Mammary epithelial cell (primary cell): ENCODE measurements at regions of chr4 and their contacts with region 1.

Region 1: DNA sequence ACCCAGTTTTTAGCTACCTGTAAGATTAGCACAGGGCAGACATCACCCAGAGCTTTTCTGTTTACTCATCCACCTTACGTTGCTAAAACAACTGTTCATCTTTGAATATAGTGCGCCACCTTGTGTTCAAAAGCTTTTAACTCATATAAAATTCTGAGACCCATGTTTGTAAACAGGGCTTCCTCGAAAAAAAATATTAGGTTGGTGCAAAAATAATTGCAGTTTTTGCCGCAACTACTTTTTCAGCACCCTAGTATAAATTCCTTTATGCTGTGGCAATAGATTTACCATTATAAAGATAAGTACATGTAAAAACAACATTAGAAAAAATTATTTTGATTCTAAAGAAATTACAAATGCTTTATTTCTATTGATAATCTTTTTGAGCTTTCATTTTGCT is 147.9 kb downstream of the LRBA start:
- DNase-seq: peak; percentile 72
- H3K4me3 ChIP-seq: no peak overlapping the region
- H3K27ac ChIP-seq: no peak overlapping the region
- H3K4me1 ChIP-seq: no peaks in the 10 kb centered on the region
- H3K27me3 ChIP-seq: no peaks in the 10 kb centered on the region
- CTCF ChIP-seq: peak; percentile 28 to 52

Region 2: DNA sequence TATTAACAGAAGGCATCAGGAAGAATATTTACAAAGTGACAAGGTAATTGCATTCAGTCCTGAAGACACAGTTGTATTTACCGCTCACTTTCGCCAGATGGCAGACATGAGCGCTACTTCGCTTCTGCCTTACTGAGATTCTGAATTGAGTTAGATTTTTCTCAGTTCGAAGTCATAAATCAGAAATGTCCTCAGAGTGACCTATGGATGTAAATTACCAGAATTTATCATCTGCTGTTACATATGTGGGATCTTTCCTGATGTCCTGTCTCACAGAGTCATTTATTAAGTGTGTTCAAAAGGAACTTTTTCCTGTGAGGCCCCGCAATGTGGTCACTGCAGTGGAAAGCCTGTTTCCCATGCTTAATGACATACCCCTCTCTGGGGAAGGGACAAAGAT is 886.2 kb before region 1 on chr4:
- CTCF ChIA-PET with region 1: no interaction called
- dilution Hi-C with region 1: no loop called
- in situ Hi-C with region 1: no loop called
- intact Hi-C with region 1: loop called (anchors 10 kb)
- DNase-seq: peak; percentile 34
- H3K4me3 ChIP-seq: no peak overlapping the region
- H3K27ac ChIP-seq: no peak overlapping the region
- H3K4me1 ChIP-seq: no peaks in the 10 kb centered on the region
- H3K27me3 ChIP-seq: no peaks in the 10 kb centered on the region
- CTCF ChIP-seq: peak; percentile 75 to 86

Region 3: GRCh38 chr4:150217192-150217591 is 650.0 kb before region 1 on chr4:
- CTCF ChIA-PET with region 1: interaction called, 3 read pairs
- dilution Hi-C with region 1: no loop called
- in situ Hi-C with region 1: no loop called
- intact Hi-C with region 1: loop called (anchors 1 kb)
- DNase-seq: peak; percentile 70
- H3K4me3 ChIP-seq: no peak overlapping the region
- H3K27ac ChIP-seq: no peak overlapping the region
- H3K4me1 ChIP-seq: peaks cover 17% of the 10 kb centered on the region
- H3K27me3 ChIP-seq: no peaks in the 10 kb centered on the region
- CTCF ChIP-seq: peak; percentile 31 to 77

Region 4: GRCh38 chr4:150297861-150298474 is 569.2 kb before region 1 on chr4:
- CTCF ChIA-PET with region 1: interaction called, 3 read pairs
- dilution Hi-C with region 1: no loop called
- in situ Hi-C with region 1: no loop called
- intact Hi-C with region 1: loop called (anchors 1 kb)
- DNase-seq: peak; percentile 43
- H3K4me3 ChIP-seq: no peak overlapping the region
- H3K27ac ChIP-seq: no peak overlapping the region
- H3K4me1 ChIP-seq: peaks cover 8% of the 10 kb centered on the region
- H3K27me3 ChIP-seq: no peaks in the 10 kb centered on the region
- CTCF ChIP-seq: peak; percentile 45 to 71

Region 5: DNA sequence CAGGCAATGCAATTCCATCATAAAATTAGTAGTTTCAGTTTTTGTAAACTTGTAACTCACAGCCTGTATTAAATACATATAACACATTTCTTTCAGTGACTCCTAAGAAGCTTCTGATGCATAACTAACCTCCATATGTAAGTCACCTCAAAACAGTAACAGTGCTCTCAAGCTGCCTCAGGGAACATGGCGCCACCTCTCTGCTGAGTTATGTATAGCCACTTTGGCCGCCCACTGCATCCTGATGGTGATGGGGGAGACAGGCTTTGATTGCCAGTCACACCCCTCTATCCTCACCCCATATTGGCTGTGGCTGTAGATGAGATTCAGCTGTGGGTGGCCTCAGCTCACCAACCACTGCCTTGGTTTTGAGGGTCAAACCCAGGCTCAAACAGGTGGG is 93.7 kb after region 1 on chr4:
- CTCF ChIA-PET with region 1: interaction called, 4 read pairs
- dilution Hi-C with region 1: no loop called
- in situ Hi-C with region 1: no loop called
- intact Hi-C with region 1: loop called (anchors 2 kb)
- DNase-seq: peak; percentile 41
- H3K4me3 ChIP-seq: no peak overlapping the region
- H3K27ac ChIP-seq: no peak overlapping the region
- H3K4me1 ChIP-seq: no peaks in the 10 kb centered on the region
- H3K27me3 ChIP-seq: no peaks in the 10 kb centered on the region
- CTCF ChIP-seq: peak; percentile 74 to 90